HepG2 (cell line): ENCODE measurements at regions of chr2 and their contacts with region 1.

Region 1: DNA sequence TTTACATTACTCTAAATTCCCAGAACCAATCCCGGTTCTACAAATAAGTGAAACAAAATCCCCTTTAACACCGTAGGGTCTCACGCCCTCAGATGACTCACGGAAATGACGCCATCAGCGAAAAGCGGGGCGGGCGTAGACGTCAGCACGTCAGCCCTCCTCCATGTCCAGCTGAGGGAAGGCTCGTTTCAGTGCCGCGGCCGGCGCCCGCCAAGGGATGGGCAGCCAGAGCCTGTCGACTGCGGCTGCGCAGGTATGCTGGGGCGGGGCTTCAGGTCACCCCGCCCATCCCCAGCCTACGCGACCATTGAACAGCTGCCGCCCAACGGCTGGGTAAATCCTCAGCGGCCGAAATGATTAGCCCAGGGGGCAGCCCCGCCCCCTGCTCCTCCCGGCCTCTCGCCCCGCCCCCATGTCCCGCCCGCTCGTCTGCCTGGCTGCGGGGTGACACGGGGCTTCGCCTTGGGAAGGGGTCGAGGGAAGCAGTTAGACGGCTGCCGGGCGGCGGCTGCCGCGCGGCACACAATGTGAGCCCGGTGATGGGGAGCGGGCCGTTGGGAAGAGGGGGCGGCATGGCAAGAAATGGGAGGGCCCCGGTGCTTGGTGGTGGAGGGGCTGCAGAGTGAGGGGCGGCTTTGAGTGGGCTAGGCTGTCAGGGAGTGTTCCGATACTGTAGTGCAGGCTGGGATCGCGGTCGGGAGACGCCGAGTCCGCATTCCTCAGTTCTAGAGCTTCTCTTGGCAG is at the start of gene NBEAL1:
- DNase-seq: peak; percentile 97
- ATAC-seq: peak; percentile 90
- H3K4me3 ChIP-seq: peak within 1 kb of the TSS; percentile 63 to 93 (median 90)
- H3K27ac ChIP-seq: peak within 1 kb of the TSS; percentile 84
- H3K4me1 ChIP-seq: peaks cover 49% of the 10 kb centered on the region
- H3K27me3 ChIP-seq: peaks cover 0 to 14% of the 10 kb centered on the region in 2 experiments; a peak in 4 of 5 replicates
- CTCF ChIP-seq: no peak
- EP300 ChIP-seq: no peak
- POLR2A ChIP-seq: peak; percentile 55 to 91
- RAD21 ChIP-seq: peak; percentile 27; the same call in 1 of the 2 replicates
- total RNA-seq, gene NBEAL1: 15.7 and 27.6 TPM in 2 replicates

Region 2: DNA sequence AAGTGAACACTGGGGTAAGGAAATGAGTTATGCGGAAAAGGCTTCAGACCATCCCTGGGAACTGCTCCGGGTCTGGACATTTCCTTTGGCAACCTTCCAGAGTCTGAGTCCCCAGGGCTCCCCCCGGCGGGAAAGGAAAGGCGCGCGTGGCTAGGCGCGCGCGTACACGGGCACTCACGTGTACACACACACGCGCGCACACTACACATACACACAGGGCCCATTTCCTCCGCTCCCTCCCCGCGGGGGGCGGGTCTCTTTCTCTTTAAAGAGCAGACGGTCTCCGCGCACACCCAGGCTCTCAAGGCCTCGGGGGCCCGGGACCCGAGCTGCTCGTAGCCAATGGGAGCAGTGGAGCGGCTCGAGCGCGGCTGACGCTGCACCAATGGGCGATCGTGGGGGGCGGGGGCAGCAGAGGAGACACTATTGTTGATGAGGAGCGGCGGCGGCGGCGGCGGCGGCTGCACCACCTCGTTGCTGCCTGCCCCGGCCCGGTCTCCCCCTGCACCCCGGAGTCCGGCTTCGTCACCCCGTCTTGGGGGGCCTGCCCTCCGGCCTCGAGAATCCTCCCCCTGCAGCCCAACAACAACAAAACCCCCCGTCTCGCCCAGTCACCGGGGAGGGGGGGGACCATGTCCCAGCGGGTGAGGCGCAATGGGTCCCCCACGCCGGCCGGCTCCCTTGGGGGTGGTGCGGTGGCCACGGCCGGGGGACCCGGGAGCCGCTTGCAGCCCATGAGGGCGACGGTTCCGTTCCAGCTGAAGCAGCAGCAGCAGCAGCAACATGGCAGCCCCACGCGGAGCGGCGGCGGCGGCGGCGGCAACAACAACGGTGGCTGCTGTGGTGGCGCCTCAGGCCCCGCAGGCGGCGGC is 379.8 kb before region 1 on chr2 and contains the start of gene FAM117B:
- CTCF ChIA-PET with region 1: no interaction called
- POLR2A ChIA-PET with region 1: interaction called, 3 read pairs
- in situ Hi-C with region 1: no loop called
- intact Hi-C with region 1: loop called (anchors 10 kb)
- DNase-seq: peak; percentile 98
- ATAC-seq: peak; percentile 97
- H3K4me3 ChIP-seq: peak within 1 kb of the TSS; percentile 96 to 99 (median 98)
- H3K27ac ChIP-seq: peak within 1 kb of the TSS; percentile 89
- H3K4me1 ChIP-seq: peaks cover 46% of the 10 kb centered on the region
- H3K27me3 ChIP-seq: no peaks in the 10 kb centered on the region; a peak in 1 of 5 replicates
- CTCF ChIP-seq: peak; percentile 46
- EP300 ChIP-seq: peak in 1 of 2 experiments; percentile 56; a peak in 2 of 4 replicates
- POLR2A ChIP-seq: peak; percentile 79 to 89
- RAD21 ChIP-seq: peak; percentile 31
- total RNA-seq, gene FAM117B: 11.0 and 16.6 TPM in 2 replicates

Region 3: GRCh38 chr2:202911512-202912341 is 102.9 kb before region 1 on chr2 and contains the starts of genes CARF and WDR12:
- CTCF ChIA-PET with region 1: no interaction called
- POLR2A ChIA-PET with region 1: interaction called, 12 read pairs
- in situ Hi-C with region 1: no loop called
- intact Hi-C with region 1: loop called (anchors 2 kb)
- DNase-seq: peak; percentile 94
- ATAC-seq: peak; percentile 92
- H3K4me3 ChIP-seq: peak within 1 kb of the TSS; percentile 88 to 96 (median 91)
- H3K27ac ChIP-seq: peak within 1 kb of the TSS; percentile 95
- H3K4me1 ChIP-seq: peaks cover 26% of the 10 kb centered on the region
- H3K27me3 ChIP-seq: peaks cover 0 to 4% of the 10 kb centered on the region in 2 experiments; a peak in 2 of 5 replicates
- CTCF ChIP-seq: no peak
- EP300 ChIP-seq: no peak
- POLR2A ChIP-seq: peak; percentile 99
- RAD21 ChIP-seq: no peak; the same call in 1 of the 2 replicates
- total RNA-seq, gene CARF: 3.0 and 3.7 TPM in 2 replicates
- total RNA-seq, gene WDR12: 216 and 330 TPM in 2 replicates

Region 4: GRCh38 chr2:202933958-202934357 is 80.7 kb before region 1 on chr2:
- CTCF ChIA-PET with region 1: no interaction called
- POLR2A ChIA-PET with region 1: no interaction called
- in situ Hi-C with region 1: no loop called
- intact Hi-C with region 1: loop called (anchors 2 kb)
- DNase-seq: no peak
- ATAC-seq: no peak
- H3K4me3 ChIP-seq: no peak overlapping the region
- H3K27ac ChIP-seq: no peak overlapping the region
- H3K4me1 ChIP-seq: no peaks in the 10 kb centered on the region
- H3K27me3 ChIP-seq: peaks cover 0 to 1% of the 10 kb centered on the region in 2 experiments; a peak in 1 of 5 replicates
- CTCF ChIP-seq: no peak
- EP300 ChIP-seq: no peak
- POLR2A ChIP-seq: no peak
- RAD21 ChIP-seq: no peak

Region 5: DNA sequence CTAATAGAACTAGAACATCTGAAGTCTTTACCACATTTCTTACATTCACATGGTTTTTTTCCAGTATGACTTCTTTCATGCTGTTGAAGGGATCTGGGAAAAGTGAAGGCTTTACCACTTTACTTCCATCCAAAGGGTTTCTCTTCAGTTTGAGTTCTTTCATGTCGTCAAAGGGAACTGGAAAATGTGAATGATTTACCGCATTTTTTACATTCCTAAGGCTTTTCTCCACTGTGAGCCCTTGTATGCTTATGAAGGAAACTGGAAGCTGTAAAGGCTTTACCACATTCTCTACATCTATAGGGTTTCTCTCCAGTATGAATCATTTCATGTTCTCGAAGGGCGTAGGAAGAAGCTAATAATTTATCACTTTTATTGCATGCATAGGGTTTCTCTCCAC is 46.7 kb after region 1 on chr2:
- CTCF ChIA-PET with region 1: no interaction called
- POLR2A ChIA-PET with region 1: interaction called, 5 read pairs
- in situ Hi-C with region 1: no loop called
- intact Hi-C with region 1: loop called (anchors 5 kb)
- DNase-seq: peak; percentile 70
- ATAC-seq: peak; percentile 87
- H3K4me3 ChIP-seq: no peak overlapping the region
- H3K27ac ChIP-seq: no peak overlapping the region
- H3K4me1 ChIP-seq: peaks cover 23% of the 10 kb centered on the region
- H3K27me3 ChIP-seq: no peaks in the 10 kb centered on the region
- CTCF ChIP-seq: no peak
- EP300 ChIP-seq: no peak
- POLR2A ChIP-seq: no peak
- RAD21 ChIP-seq: no peak

Region 6: GRCh38 chr2:203097735-203098134 is 83.1 kb after region 1 on chr2:
- CTCF ChIA-PET with region 1: no interaction called
- POLR2A ChIA-PET with region 1: no interaction called
- in situ Hi-C with region 1: no loop called
- intact Hi-C with region 1: loop called (anchors 1 kb)
- DNase-seq: peak; percentile 36
- ATAC-seq: peak; percentile 90
- H3K4me3 ChIP-seq: no peak overlapping the region
- H3K27ac ChIP-seq: no peak overlapping the region
- H3K4me1 ChIP-seq: no peaks in the 10 kb centered on the region
- H3K27me3 ChIP-seq: no peaks in the 10 kb centered on the region
- CTCF ChIP-seq: peak; percentile 48
- EP300 ChIP-seq: no peak
- POLR2A ChIP-seq: no peak
- RAD21 ChIP-seq: no peak